ENCODE measurements at regions of chr6 and their contacts with region 1.

Region 1: GRCh38 chr6:152943260-152943896 is 39.5 kb downstream of the FBXO5 start:
- DNase-seq: no peak

Region 2: DNA sequence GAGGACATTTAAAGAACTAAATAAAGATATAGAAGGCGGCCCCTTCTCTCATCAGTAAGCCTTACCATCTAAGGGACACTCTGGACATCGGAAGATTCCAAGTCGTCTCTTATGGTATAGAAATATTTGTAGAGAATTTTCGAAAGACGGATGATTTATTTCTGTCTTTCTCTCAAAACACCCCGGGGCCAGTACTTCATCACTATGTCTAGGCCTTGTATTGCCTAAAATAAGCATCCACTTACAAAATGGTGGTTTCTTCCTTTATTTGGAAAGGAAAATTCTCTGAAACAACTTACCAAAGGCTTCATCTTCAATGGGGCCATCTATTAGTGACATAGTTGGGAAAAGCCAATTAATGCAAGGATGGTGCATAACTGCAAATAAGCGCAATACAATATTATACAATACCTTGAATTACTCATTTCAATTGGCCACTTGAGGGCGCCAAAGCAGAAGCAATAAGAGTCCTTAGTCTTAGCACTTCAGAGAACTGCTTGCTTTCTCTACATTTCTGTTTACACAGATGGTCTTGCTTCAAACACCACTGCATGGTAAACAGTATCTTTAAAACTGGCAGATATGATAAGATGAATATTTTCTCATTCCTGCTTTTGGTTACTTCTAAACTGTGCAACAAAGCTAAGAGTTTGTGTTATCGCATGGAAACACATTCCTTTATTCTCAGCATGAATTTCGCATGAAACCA is 79.6 kb before region 1 on chr6:
- in situ Hi-C with region 1: loop called (anchors 5 kb)
- DNase-seq: peak; percentile 88